ENCODE measurements at regions of chr17 and their contacts with region 1.

Region 1: DNA sequence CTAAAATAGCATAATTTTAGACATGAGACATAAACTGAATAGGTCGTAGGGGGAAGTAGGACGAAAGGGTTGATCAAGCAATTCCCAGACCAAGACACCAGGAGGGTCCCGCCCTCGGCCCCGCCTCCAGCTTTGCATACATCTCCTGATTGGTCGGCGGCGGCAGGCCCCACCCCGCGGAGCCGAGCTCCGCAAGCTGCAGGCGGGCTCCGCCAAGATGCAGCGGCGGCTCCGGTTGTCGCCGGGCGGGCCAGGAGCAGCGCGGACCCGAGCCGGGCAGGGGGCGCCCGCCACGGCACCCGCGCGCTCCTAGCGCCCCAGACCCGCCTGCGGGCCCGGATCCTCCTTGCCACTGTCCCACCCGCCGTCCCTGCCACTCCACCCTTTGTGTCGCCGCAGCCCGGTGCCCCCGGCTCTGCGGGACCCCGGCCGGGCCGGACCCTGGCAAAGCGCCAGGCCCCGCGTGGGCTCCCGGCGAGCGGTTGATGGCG is at the start of gene CDR2L:
- DNase-seq: peak; percentile 98
- ATAC-seq: peak; percentile 90
- H3K4me3 Mint-ChIP-seq: peak within 1 kb of the TSS; percentile 97
- H3K27ac Mint-ChIP-seq: peak within 1 kb of the TSS; percentile 100
- H3K4me1 Mint-ChIP-seq: peaks cover 18% of the 10 kb centered on the region
- H3K27me3 Mint-ChIP-seq: peaks cover 2% of the 10 kb centered on the region; the same call in 1 of the 2 replicates
- CTCF ChIP-seq: no peak
- total RNA-seq, gene CDR2L: 28.6 to 31.3 TPM (median 31.0 TPM) in 3 replicates

Region 2: GRCh38 chr17:74972107-74972972 is 15.1 kb before region 1 on chr17 and contains the start of gene HID1:
- CTCF ChIA-PET with region 1: interaction called, 13 read pairs
- POLR2A ChIA-PET with region 1: interaction called, 10 read pairs
- DNase-seq: peak; percentile 89
- ATAC-seq: peak; percentile 83
- H3K4me3 Mint-ChIP-seq: peak within 1 kb of the TSS; percentile 90
- H3K27ac Mint-ChIP-seq: no peak within 1 kb of the TSS
- H3K4me1 Mint-ChIP-seq: peaks cover 12% of the 10 kb centered on the region
- H3K27me3 Mint-ChIP-seq: peaks cover 55% of the 10 kb centered on the region
- CTCF ChIP-seq: no peak
- total RNA-seq, gene HID1: 16.7 to 19.4 TPM (median 19.3 TPM) in 3 replicates

Region 3: DNA sequence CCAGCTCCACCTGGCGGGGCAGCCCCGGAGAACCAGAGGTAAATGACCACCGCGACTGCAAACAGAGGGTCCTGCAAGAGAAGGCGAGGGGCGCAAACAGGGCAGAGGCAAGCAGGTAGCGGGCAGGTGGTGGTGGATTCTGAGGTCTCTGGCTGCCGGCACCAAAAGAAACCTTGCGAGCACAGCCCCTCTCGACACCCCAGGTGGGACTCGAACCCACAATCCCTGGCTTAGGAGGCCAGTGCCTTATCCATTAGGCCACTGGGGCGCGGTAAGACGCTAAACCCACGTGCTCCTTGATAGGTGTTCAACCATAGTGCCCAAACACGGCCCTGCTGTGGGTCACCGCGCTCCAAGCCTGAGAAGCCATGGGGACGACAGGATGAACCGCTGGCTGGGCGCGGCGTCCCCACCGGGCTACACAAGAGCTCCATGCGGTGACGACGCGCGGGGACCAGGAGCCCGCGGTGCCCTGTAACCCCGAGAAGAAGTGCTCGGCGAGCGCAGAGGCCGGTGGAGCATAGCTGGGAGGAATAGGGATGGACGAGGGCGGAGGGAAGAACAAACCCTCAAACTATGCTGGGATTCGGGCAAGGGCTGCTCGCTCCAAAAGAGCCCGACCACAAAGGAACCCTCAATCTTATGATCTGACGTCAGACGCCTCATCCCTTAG is 46.9 kb after region 1 on chr17:
- CTCF ChIA-PET with region 1: interaction called, 11 read pairs
- POLR2A ChIA-PET with region 1: interaction called, 8 read pairs
- DNase-seq: peak; percentile 96
- ATAC-seq: peak; percentile 42
- H3K4me3 Mint-ChIP-seq: peak overlapping the region; percentile 99
- H3K27ac Mint-ChIP-seq: peak overlapping the region; percentile 94
- H3K4me1 Mint-ChIP-seq: peaks cover 26% of the 10 kb centered on the region
- H3K27me3 Mint-ChIP-seq: peaks cover 26% of the 10 kb centered on the region
- CTCF ChIP-seq: no peak

Region 4: GRCh38 chr17:75060434-75061054 is 73.1 kb after region 1 on chr17:
- CTCF ChIA-PET with region 1: no interaction called
- POLR2A ChIA-PET with region 1: no interaction called
- DNase-seq: no peak
- ATAC-seq: no peak
- H3K4me3 Mint-ChIP-seq: no peak overlapping the region
- H3K27ac Mint-ChIP-seq: 0 out of 2 replicates have a peak overlapping the region, but pooled peaks have one; percentile 12
- H3K4me1 Mint-ChIP-seq: no peaks in the 10 kb centered on the region
- H3K27me3 Mint-ChIP-seq: no peaks in the 10 kb centered on the region
- CTCF ChIP-seq: no peak

Measured in WTC11 (cell line).